Sigmoid colon (tissue), 7 donors: ENCODE measurements at regions of chr9 and their contacts with region 1.

Region 1: DNA sequence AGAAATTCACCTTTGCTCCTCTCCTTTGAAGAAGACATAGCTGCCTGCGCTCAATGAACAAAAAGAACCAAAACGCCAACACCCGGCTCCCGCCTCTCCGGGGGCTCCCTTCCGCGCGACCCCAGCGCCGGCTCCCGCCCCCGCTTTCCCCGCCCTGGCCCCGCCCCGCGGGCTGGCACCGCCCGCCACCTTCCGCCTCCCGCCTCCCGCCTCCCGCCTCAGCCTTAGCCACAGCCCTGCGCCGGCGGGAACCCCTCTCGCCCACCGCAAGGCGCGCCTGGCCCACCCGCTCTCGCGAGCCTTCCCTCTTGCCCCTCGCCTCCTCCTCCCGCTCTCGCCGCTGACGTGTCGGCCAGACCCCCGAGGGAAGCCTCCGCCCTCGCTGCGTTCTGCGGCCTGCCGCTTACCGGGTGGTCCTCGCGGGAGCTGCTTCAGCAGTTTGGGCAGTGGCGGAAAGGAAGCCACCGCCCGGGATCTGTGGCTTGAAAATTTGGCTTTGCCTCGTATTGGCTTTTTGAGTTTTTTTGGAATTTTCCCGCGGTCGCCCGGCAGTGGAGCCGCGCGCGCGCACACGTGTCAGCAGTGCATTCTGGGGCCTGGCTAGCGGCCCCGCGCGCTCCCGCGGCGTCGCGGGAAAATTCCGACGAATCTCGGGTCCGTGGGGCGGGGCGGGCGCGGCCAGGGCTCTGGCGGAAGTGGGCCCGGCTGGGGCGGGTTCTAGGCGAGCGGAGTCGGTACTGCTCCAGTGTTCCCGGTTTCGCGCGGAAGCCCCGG is at the start of gene FANCC:
- DNase-seq: peak; percentile 95
- H3K4me3 ChIP-seq: peak within 1 kb of the TSS; percentile 76 to 99 (median 79)
- H3K27ac ChIP-seq: peak within 1 kb of the TSS; percentile 91 to 99 (median 94)
- H3K4me1 ChIP-seq: peaks cover 0 to 13% (median 5%) of the 10 kb centered on the region in 4 donors
- H3K27me3 ChIP-seq: no peaks in the 10 kb centered on the region
- CTCF ChIP-seq: no peak
- EP300 ChIP-seq: peak in 1 of 4 donors; percentile 42
- POLR2A ChIP-seq: no peak
- total RNA-seq, gene FANCC: 3.9 to 10.6 (median 5.3) TPM

Region 2: GRCh38 chr9:95157481-95158151 is 159.7 kb before region 1 on chr9:
- intact Hi-C with region 1: no loop called
- DNase-seq: peak; percentile 90
- H3K4me3 ChIP-seq: no peak overlapping the region
- H3K27ac ChIP-seq: peak overlapping the region; percentile 20 to 53 (median 39)
- H3K4me1 ChIP-seq: peaks cover 0 to 14% (median 13%) of the 10 kb centered on the region in 4 donors
- H3K27me3 ChIP-seq: no peaks in the 10 kb centered on the region
- CTCF ChIP-seq: no peak
- EP300 ChIP-seq: no peak
- POLR2A ChIP-seq: no peak

Region 3: DNA sequence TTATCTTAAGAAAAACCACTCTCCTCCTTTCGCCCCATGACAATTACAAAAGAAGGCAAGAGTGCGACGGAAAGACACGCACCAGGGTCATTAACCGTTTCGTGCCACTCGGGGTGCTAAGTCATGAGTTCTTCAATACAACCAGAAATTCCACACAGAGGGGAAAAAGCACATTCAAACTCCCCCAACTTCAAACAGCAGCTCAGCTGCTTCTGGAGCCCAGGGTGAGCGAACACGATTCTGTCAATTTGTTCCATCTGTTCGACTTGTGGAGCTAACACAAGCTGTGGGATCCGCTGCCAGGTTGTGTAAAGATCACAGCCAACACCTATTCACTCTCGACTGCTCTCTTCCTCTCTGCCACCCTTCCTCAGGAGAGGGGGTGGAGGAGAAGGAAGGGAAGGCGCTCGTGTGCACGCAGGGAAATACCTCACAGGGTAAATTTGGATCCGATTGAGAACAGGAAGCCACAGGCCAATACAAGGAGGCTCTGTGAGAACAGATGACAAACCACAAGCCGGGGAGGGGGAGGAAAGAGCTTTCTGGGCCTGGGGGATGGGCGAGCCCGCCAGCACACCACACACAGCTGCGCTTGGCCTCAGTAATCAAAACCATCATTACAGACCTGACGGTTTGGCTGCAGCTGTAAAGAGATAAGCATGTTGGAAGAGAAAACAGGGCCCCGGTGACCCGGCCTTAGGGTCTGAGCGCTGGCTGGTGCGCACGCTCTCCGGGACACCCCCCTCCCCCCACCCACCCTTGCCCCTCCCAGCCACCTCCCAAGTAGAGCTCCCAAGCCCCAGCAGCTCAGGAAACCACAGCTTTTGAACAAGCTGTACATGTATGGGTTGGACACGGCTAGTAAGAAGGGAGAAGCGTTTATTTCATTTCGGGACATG is 145.2 kb after region 1 on chr9:
- intact Hi-C with region 1: loop called (anchors 5 kb)
- DNase-seq: peak; percentile 85
- H3K4me3 ChIP-seq: peak overlapping the region in 3 of 4 donors; percentile 11 to 30 (median 30)
- H3K27ac ChIP-seq: peak overlapping the region; percentile 38 to 79 (median 64)
- H3K4me1 ChIP-seq: peaks cover 0 to 68% (median 60%) of the 10 kb centered on the region in 4 donors
- H3K27me3 ChIP-seq: no peaks in the 10 kb centered on the region
- CTCF ChIP-seq: no peak
- EP300 ChIP-seq: no peak
- POLR2A ChIP-seq: no peak